Activated B cell treated with CpG ODN at 0.5 μM for 24 hours (primary cell): ENCODE measurements at regions of chr14 and their contacts with region 1.

Region 1: GRCh38 chr14:50532502-50533240 is at the start of gene MAP4K5:
- DNase-seq: peak; percentile 83
- ATAC-seq: peak; percentile 94
- H3K4me3 Mint-ChIP-seq: peak within 1 kb of the TSS; percentile 84
- H3K27ac Mint-ChIP-seq: peak within 1 kb of the TSS; percentile 88
- H3K4me1 Mint-ChIP-seq: peaks cover 47% of the 10 kb centered on the region
- H3K27me3 Mint-ChIP-seq: no peaks in the 10 kb centered on the region
- CTCF ChIP-seq: no peak
- total RNA-seq, gene MAP4K5: 32.5 and 34.1 TPM in 2 replicates

Region 2: DNA sequence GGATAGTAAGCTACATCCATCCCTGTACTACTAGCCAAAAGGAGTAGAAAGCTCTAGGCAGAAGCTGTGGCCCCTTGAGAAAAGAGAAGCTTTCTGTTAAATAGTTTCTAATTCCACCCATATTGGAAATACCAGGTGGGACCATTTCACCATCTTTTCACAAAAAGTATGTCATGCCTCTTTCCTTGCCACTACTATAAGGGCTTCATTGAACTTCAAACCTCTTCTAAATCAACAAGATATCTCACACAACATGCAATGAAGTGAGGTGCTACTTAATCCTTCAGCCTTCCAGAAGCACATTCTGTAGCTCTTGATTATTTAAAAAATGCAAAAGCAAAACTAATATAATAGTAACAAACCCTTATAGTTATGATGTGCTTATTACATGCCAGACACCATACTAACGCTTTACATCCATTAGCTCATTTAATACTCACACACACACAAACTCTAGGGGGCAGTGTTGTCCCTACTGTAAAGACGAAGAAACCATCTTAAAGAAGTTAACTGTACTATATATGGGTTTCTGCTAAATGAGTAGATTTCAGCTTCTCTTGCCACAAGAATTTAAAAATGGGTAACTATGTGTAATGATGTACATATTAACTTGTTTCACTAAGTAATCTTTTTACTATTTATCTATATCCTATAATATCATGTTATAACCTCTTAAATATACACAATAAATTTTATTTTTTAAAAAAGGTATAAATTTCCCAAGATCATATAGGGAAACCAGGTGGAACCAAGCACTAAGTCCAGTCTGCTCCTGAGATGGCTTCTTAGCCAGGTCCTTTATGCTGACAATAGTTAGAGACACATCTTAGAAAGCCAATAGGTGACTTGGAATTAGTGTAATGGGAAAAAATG is 1070.9 kb before region 1 on chr14:
- CTCF ChIA-PET with region 1: no interaction called
- POLR2A ChIA-PET with region 1: no interaction called
- intact Hi-C with region 1: loop called (anchors 5 kb)
- DNase-seq: no peak
- ATAC-seq: peak; percentile 81
- H3K4me3 Mint-ChIP-seq: no peak overlapping the region
- H3K27ac Mint-ChIP-seq: no peak overlapping the region
- H3K4me1 Mint-ChIP-seq: no peaks in the 10 kb centered on the region
- H3K27me3 Mint-ChIP-seq: peaks cover 5% of the 10 kb centered on the region
- CTCF ChIP-seq: peak; percentile 62

Region 3: GRCh38 chr14:49767562-49768300 is 764.9 kb before region 1 on chr14 and contains the start of gene KLHDC2:
- CTCF ChIA-PET with region 1: no interaction called
- POLR2A ChIA-PET with region 1: no interaction called
- intact Hi-C with region 1: loop called (anchors 5 kb)
- DNase-seq: peak; percentile 86
- ATAC-seq: peak; percentile 88
- H3K4me3 Mint-ChIP-seq: peak within 1 kb of the TSS; percentile 97
- H3K27ac Mint-ChIP-seq: peak within 1 kb of the TSS; percentile 99
- H3K4me1 Mint-ChIP-seq: peaks cover 33% of the 10 kb centered on the region
- H3K27me3 Mint-ChIP-seq: no peaks in the 10 kb centered on the region
- CTCF ChIP-seq: no peak
- total RNA-seq, gene KLHDC2: 27.0 and 31.2 TPM in 2 replicates

Region 4: GRCh38 chr14:50231475-50232275 is 301.0 kb before region 1 on chr14 and contains the start of gene SOS2:
- CTCF ChIA-PET with region 1: no interaction called
- POLR2A ChIA-PET with region 1: no interaction called
- intact Hi-C with region 1: loop called (anchors 1 kb)
- DNase-seq: peak; percentile 87
- ATAC-seq: peak; percentile 87
- H3K4me3 Mint-ChIP-seq: peak within 1 kb of the TSS; percentile 93
- H3K27ac Mint-ChIP-seq: peak within 1 kb of the TSS; percentile 92
- H3K4me1 Mint-ChIP-seq: peaks cover 35% of the 10 kb centered on the region
- H3K27me3 Mint-ChIP-seq: no peaks in the 10 kb centered on the region
- CTCF ChIP-seq: no peak
- total RNA-seq, gene SOS2: 29.1 and 32.0 TPM in 2 replicates

Region 5: GRCh38 chr14:50285861-50286260 is 246.8 kb before region 1 on chr14:
- CTCF ChIA-PET with region 1: no interaction called
- POLR2A ChIA-PET with region 1: no interaction called
- intact Hi-C with region 1: no loop called
- DNase-seq: no peak
- ATAC-seq: no peak
- H3K4me3 Mint-ChIP-seq: no peak overlapping the region
- H3K27ac Mint-ChIP-seq: no peak overlapping the region
- H3K4me1 Mint-ChIP-seq: no peaks in the 10 kb centered on the region
- H3K27me3 Mint-ChIP-seq: no peaks in the 10 kb centered on the region
- CTCF ChIP-seq: no peak

Region 6: GRCh38 chr14:50342221-50343078 is 190.2 kb before region 1 on chr14:
- CTCF ChIA-PET with region 1: interaction called, 9 read pairs
- POLR2A ChIA-PET with region 1: interaction called, 9 read pairs
- intact Hi-C with region 1: loop called (anchors 1 kb)
- DNase-seq: no peak
- ATAC-seq: peak; percentile 36
- H3K4me3 Mint-ChIP-seq: no peak overlapping the region
- H3K27ac Mint-ChIP-seq: peak overlapping the region; percentile 19
- H3K4me1 Mint-ChIP-seq: peaks cover 21% of the 10 kb centered on the region
- H3K27me3 Mint-ChIP-seq: no peaks in the 10 kb centered on the region
- CTCF ChIP-seq: no peak